ENCODE measurements at regions of chr10 and their contacts with region 1.

Region 1: DNA sequence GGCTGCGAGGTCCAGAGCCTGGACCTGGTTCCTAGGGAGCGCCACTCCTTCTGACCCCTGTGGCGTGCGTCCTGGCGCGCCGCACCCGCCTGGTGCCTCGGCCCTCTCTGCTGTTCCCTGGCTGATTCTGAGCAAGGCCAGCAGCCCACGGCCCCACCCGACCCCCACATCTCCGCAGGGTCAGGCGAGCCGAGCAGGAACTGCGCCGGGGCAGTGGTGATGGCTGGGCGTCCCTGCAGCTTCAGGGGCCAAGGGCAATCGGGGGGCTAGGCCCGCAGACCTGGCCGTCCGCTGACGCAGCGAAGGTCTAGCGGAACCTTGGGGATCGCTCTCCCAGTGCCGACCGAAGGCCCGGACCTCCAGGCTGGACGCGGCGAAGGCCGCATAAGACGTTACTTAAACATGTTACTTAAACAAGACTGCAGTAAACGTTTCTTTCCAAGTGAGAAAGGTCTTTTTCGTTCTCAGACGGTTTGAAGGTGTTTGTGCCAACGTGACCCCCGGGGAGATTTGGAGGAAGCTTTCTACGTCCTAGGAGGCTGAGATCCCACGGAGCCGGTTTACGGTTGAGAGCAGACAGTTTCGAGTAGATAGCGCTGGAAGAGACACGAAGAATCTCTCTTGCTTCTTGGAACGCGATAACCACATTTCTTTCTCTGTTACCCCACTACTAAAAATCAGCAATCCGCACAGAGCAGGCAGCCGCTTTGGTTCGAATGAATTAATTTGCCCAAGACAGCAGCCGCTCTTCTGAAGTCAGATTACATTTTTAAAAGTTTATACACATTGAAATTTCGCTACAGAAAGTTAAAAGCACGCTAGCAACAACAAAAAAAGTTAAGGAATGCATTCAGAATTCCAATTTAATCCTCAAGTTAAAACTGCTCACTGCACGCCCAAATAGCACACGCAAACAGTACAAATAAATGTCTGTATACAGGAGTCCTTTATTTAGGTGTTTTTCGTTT is 4.9 kb upstream of the NKX2-3 start:
- DNase-seq: no peak
- ATAC-seq: no peak
- H3K4me3 ChIP-seq: no peak overlapping the region
- H3K4me3 Mint-ChIP-seq: no peak overlapping the region
- H3K27ac ChIP-seq: no peak overlapping the region
- H3K27ac Mint-ChIP-seq: no peak overlapping the region
- H3K4me1 ChIP-seq: peaks cover 36% of the 10 kb centered on the region
- H3K4me1 Mint-ChIP-seq: peaks cover 39 to 44% of the 10 kb centered on the region in 2 donors
- H3K27me3 ChIP-seq: peaks cover 61% of the 10 kb centered on the region
- H3K27me3 Mint-ChIP-seq: peaks cover 69 to 82% of the 10 kb centered on the region in 2 donors
- CTCF ChIP-seq: no peak

Region 2: DNA sequence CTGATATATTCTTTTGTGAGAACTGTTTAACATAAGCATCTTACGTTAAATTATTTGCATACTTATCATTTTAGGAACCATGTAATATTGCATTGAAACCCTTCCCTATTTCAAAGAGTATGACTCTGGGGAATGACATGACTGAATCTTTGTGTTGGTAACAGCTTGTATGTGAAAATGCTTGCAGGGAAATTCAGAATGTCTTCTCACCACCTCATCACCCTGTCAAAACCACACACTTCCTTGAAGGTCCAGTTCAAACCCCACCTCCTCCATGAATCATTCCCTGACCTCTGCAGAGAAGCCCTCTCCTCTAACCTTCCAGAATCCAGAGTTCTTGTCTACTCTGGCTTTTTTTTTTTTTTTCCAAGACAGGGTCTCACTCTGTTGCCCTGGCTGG is 21.4 kb before region 1 on chr10:
- intact Hi-C with region 1: loop called (anchors 2 kb)
- DNase-seq: no peak
- ATAC-seq: no peak
- H3K4me3 ChIP-seq: no peak overlapping the region
- H3K4me3 Mint-ChIP-seq: no peak overlapping the region
- H3K27ac ChIP-seq: no peak overlapping the region
- H3K27ac Mint-ChIP-seq: no peak overlapping the region
- H3K4me1 ChIP-seq: no peaks in the 10 kb centered on the region
- H3K4me1 Mint-ChIP-seq: no peaks in the 10 kb centered on the region
- H3K27me3 ChIP-seq: no peaks in the 10 kb centered on the region
- H3K27me3 Mint-ChIP-seq: peaks cover 13 to 18% of the 10 kb centered on the region in 2 donors
- CTCF ChIP-seq: no peak